GM12878 (cell line): ENCODE measurements at regions of chr20 and their contacts with region 1.

Region 1: GRCh38 chr20:15200147-15200565 is 862.7 kb upstream of the FLRT3 start:
- DNase-seq: peak; percentile 51
- ATAC-seq: peak; percentile 85
- H3K4me3 ChIP-seq: no peak overlapping the region
- H3K27ac ChIP-seq: no peak overlapping the region
- H3K4me1 ChIP-seq: peaks cover 8% of the 10 kb centered on the region
- H3K27me3 ChIP-seq: no peaks in the 10 kb centered on the region
- CTCF ChIP-seq: no peak
- EP300 ChIP-seq: 0 out of 4 replicates have a peak, but pooled peaks of 1 of the 2 experiments have one; percentile 27
- POLR2A ChIP-seq: no peak
- RAD21 ChIP-seq: no peak

Region 2: DNA sequence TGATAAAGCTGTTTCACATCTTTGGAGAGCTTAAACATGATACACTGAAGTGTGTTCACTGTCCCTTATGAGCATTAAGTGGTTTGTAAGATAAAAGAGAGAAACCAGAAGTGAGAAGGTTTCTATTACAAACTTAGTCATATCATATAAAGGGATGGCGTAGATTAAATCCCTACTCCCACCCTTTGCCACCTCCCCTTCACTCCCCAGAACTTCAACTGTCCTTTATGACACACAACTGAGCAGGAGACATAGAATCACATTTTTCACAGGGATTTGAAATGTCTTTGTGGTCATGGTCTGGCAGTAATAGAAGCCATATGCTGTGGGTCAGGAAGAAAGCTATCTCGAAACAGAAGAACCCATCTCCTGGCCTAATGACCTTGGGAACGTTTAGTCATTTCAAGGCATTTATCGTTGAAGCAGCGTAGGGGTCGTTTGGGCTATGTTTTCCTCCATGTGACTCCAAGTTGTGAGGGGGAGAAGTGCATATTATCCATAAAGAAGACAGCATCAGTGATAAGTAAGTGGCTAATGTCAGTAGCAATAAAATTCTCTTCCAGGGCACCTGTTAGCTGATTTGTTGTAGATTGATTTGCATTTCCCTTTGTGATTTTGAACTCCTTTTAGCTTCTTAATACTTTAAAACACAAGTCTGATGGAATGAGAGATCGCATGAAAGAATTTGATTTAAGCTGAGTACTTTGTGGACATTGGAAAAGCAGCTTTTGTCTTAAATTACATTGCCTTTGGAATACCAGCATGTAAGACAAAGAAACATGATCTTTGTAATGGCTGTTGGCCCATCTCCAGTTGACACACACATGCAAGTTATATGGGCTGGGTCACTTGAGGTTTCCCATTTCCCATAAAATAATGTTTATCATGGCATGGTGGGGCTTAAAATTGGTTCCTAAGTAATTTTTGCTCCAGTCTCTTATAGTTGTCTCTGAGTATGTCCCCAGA is 361.2 kb before region 1 on chr20:
- CTCF ChIA-PET with region 1: no interaction called
- POLR2A ChIA-PET with region 1: no interaction called
- RAD21 ChIA-PET with region 1: no interaction called
- SMC1A ChIA-PET with region 1: no interaction called
- in situ Hi-C with region 1: no loop called
- intact Hi-C with region 1: loop called (anchors 10 kb)
- DNase-seq: peak; percentile 73
- ATAC-seq: peak; percentile 95
- H3K4me3 ChIP-seq: no peak overlapping the region
- H3K27ac ChIP-seq: peak overlapping the region; percentile 24
- H3K4me1 ChIP-seq: peaks cover 7% of the 10 kb centered on the region; the same call in 1 of the 2 replicates
- H3K27me3 ChIP-seq: no peaks in the 10 kb centered on the region
- CTCF ChIP-seq: no peak
- EP300 ChIP-seq: peak; percentile 74 to 90; a peak in 3 of 4 replicates
- POLR2A ChIP-seq: no peak
- RAD21 ChIP-seq: no peak

Region 3: GRCh38 chr20:15317546-15318232 is 117.5 kb after region 1 on chr20:
- CTCF ChIA-PET with region 1: no interaction called
- POLR2A ChIA-PET with region 1: no interaction called
- RAD21 ChIA-PET with region 1: no interaction called
- SMC1A ChIA-PET with region 1: no interaction called
- in situ Hi-C with region 1: no loop called
- intact Hi-C with region 1: loop called (anchors 5 kb)
- DNase-seq: peak; percentile 69
- ATAC-seq: peak; percentile 90
- H3K4me3 ChIP-seq: 0 out of 2 replicates have a peak overlapping the region, but pooled peaks have one; percentile 33
- H3K27ac ChIP-seq: peak overlapping the region; percentile 93
- H3K4me1 ChIP-seq: peaks cover 21% of the 10 kb centered on the region
- H3K27me3 ChIP-seq: no peaks in the 10 kb centered on the region
- CTCF ChIP-seq: no peak
- EP300 ChIP-seq: 0 out of 4 replicates have a peak, but pooled peaks of 1 of the 2 experiments have one; percentile 43
- POLR2A ChIP-seq: no peak
- RAD21 ChIP-seq: no peak